Ascending aorta (tissue), 2 donors: ENCODE measurements at regions of chr1 and their contacts with region 1.

Region 1: GRCh38 chr1:181479137-181479745 is 4.1 kb upstream of the CACNA1E start:
- DNase-seq: no peak
- H3K4me3 ChIP-seq: no peak overlapping the region
- H3K27ac ChIP-seq: no peak overlapping the region
- H3K4me1 ChIP-seq: no peaks in the 10 kb centered on the region
- H3K27me3 ChIP-seq: peaks cover 6% of the 10 kb centered on the region
- CTCF ChIP-seq: peak; percentile 27 to 49 (median 40)

Region 2: DNA sequence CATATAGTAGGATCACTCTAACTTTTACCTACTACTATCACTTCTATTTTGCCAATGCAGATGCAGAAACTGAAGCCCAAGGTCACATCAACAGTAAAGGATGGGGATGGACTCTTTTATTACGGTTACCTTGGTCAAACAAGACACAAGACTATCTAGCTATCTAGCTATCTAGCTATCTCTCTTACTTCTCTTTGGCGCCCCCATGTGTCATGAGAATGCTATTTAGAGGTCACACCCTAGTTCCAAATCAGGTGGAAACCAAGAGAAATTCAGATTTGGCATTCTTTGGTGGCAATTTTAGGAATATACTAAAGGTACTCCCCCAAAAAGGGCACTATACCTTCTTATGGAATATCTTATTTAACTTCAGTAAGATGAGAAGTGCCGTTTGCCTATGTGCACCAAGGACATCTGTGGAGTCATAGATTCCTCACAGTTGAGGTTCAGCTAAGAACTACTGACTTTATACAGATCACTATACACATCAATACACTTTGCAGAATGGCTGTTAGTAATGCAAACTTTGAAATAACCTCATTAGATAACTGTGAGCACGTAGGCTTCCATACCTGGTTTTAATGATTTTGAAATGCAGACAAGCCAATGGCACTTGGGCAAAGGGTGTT is 575.6 kb after region 1 on chr1:
- intact Hi-C with region 1: loop called (anchors 10 kb)
- DNase-seq: no peak
- H3K4me3 ChIP-seq: no peak overlapping the region
- H3K27ac ChIP-seq: no peak overlapping the region
- H3K4me1 ChIP-seq: no peaks in the 10 kb centered on the region
- H3K27me3 ChIP-seq: no peaks in the 10 kb centered on the region
- CTCF ChIP-seq: peak in 1 of 3 experiments; percentile 35

Region 3: GRCh38 chr1:182235952-182236650 is 756.9 kb after region 1 on chr1:
- intact Hi-C with region 1: no loop called
- DNase-seq: no peak
- H3K4me3 ChIP-seq: no peak overlapping the region
- H3K27ac ChIP-seq: no peak overlapping the region
- H3K4me1 ChIP-seq: no peaks in the 10 kb centered on the region
- H3K27me3 ChIP-seq: no peaks in the 10 kb centered on the region
- CTCF ChIP-seq: no peak